ENCODE measurements at regions of chr1 and their contacts with region 1.

Region 1: DNA sequence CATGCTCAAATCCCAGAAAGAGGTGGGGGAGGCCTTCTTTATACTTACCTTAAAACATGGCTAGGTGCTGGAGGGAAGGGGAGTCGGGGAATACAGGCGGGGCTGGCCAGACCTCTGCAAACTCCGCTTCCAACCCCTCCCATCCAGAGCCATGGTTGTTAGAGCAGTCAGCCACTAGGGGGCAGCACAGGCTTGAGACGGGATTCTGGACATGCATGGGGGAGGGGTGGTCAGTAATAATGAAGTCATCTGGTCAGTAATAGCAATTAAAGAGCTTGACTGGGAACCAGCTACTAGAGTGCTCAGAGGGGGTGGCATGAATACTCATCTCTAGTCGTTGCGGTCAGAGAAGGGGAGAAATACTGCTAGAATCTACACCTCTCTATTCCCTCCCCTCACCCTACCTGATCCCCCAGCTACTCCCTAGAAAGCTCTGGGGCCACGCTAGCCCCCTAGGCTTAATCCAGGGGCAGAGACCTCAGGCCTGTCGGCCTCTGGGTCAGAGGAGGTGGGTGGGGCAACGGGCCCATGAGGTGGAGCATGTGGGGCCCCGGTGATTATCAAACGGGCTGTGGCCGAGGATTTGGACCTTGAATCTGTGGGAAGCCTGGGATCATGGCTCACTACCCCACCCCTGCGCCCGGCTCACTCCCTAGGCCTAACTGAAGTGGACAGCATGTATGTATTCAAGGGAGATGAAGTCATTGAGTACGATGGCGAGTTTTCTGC is 2.9 kb downstream of the CASQ1 start:
- DNase-seq: peak; percentile 80 to 96
- H3K4me3 ChIP-seq: no peak overlapping the region
- CTCF ChIP-seq: peak in 2 of 3 donors; percentile 89 to 92
- POLR2A ChIP-seq: no peak

Region 2: GRCh38 chr1:160101037-160101716 is 92.1 kb before region 1 on chr1:
- intact Hi-C with region 1: loop called (anchors 10 kb)
- DNase-seq: peak; percentile 67 to 94
- H3K4me3 ChIP-seq: no peak overlapping the region
- CTCF ChIP-seq: peak in 1 of 3 donors; percentile 41
- POLR2A ChIP-seq: no peak

Region 3: GRCh38 chr1:160123726-160124125 is 69.5 kb before region 1 on chr1:
- intact Hi-C with region 1: loop called (anchors 2 kb)
- DNase-seq: no peak
- H3K4me3 ChIP-seq: no peak overlapping the region
- CTCF ChIP-seq: no peak
- POLR2A ChIP-seq: no peak

Region 4: GRCh38 chr1:160251687-160252526 is 58.7 kb after region 1 on chr1:
- intact Hi-C with region 1: loop called (anchors 5 kb)
- DNase-seq: peak in 1 of 2 donors; percentile 53
- H3K4me3 ChIP-seq: no peak overlapping the region
- CTCF ChIP-seq: peak in 1 of 3 donors; percentile 35
- POLR2A ChIP-seq: no peak

Region 5: DNA sequence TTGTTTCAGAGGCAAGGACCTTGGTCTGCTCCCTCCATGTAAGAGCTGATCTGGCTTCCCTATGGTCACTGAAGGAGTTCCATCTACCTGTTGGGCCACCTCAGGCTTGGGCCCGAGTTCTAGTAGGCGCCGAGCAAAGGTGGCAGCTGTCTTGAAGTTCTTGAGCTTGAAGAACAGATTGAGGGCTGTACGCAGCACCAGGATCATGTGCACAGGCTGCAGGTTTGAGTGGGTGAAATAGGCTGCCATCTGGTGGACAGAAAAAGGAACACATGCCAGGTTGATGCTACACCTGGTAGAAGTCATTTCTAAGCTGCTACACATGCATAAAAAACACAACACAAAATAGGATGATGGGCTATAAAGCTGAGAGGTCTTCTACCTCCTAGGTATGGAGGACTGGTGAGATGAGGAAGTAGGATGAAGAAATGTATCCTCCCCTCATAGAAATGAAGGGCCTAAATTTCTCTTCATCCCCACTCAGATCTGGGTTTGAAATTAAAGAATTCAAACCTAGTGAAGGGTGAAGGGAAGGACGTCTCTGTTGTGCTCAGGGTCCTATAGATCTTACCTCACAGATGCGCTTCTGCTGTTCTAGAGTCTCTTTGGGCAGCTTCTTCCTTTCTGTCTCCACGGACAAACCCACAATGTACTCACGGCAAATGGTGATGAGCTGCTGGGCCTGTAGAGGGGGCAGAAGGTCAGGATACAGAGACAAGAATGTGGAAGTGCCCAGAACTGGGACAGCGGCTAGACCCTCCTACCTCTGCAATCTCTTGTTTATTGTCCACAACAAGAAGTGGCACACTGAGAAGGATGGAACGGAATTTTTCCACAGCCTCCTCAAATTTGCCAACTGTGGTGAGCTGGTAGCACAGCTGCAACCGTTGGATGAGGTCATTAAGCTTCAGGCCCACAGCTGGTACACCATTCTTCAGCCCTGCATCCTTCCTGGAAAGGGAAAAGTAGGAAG is 98.3 kb after region 1 on chr1:
- intact Hi-C with region 1: loop called (anchors 5 kb)
- DNase-seq: peak; percentile 56 to 89
- H3K4me3 ChIP-seq: no peak overlapping the region
- CTCF ChIP-seq: peak in 1 of 3 donors; percentile 49
- POLR2A ChIP-seq: no peak

Measured in lower leg skin (tissue), 4 donors.